CD4-positive, alpha-beta T cell (primary cell): ENCODE measurements at regions of chr5 and their contacts with region 1.

Region 1: DNA sequence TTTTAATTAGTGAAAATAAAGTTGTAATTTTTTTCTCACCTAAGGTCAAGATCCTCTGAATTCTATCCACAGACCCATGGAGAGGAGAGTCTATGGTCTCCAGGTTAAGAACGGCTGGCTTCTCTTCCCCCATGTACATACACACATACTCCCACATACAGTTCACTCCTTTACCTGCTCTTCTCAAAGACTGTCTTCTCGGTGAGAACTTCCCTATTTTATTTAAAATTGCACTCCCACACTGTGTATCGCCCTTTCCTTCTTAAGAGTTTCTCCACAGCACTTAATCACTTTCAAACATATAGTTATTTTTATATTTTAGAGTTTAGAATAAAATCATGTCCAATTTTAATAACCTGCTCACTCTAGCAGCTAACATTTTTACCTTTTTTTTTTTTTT is 3.6 kb upstream of the JADE2 start:
- DNase-seq: no peak
- ATAC-seq: no peak
- H3K4me3 ChIP-seq: no peak overlapping the region
- H3K4me3 Mint-ChIP-seq: no peak overlapping the region
- H3K27ac ChIP-seq: no peak overlapping the region
- H3K27ac Mint-ChIP-seq: peak overlapping the region; percentile 100
- H3K4me1 ChIP-seq: peaks cover 11% of the 10 kb centered on the region
- H3K4me1 Mint-ChIP-seq: peaks cover 15% of the 10 kb centered on the region
- H3K27me3 ChIP-seq: no peaks in the 10 kb centered on the region
- H3K27me3 Mint-ChIP-seq: no peaks in the 10 kb centered on the region
- CTCF ChIP-seq: no peak

Region 2: GRCh38 chr5:134493461-134494055 is 28.3 kb before region 1 on chr5:
- CTCF ChIA-PET with region 1: no interaction called
- POLR2A ChIA-PET with region 1: interaction called, 3 read pairs
- intact Hi-C with region 1: loop called in 1 of 2 experiments (anchors 2 kb)
- DNase-seq: no peak
- ATAC-seq: no peak
- H3K4me3 ChIP-seq: no peak overlapping the region
- H3K4me3 Mint-ChIP-seq: no peak overlapping the region
- H3K27ac ChIP-seq: no peak overlapping the region
- H3K27ac Mint-ChIP-seq: no peak overlapping the region
- H3K4me1 ChIP-seq: no peaks in the 10 kb centered on the region
- H3K4me1 Mint-ChIP-seq: no peaks in the 10 kb centered on the region
- H3K27me3 ChIP-seq: no peaks in the 10 kb centered on the region
- H3K27me3 Mint-ChIP-seq: no peaks in the 10 kb centered on the region
- CTCF ChIP-seq: no peak

Region 3: GRCh38 chr5:134561871-134562296 is 40.0 kb after region 1 on chr5:
- CTCF ChIA-PET with region 1: no interaction called
- POLR2A ChIA-PET with region 1: no interaction called
- intact Hi-C with region 1: no loop called
- DNase-seq: no peak
- ATAC-seq: no peak
- H3K4me3 ChIP-seq: no peak overlapping the region
- H3K4me3 Mint-ChIP-seq: no peak overlapping the region
- H3K27ac ChIP-seq: no peak overlapping the region
- H3K27ac Mint-ChIP-seq: peak overlapping the region; percentile 56
- H3K4me1 ChIP-seq: peaks cover 21% of the 10 kb centered on the region
- H3K4me1 Mint-ChIP-seq: peaks cover 7% of the 10 kb centered on the region
- H3K27me3 ChIP-seq: no peaks in the 10 kb centered on the region
- H3K27me3 Mint-ChIP-seq: no peaks in the 10 kb centered on the region
- CTCF ChIP-seq: no peak

Region 4: DNA sequence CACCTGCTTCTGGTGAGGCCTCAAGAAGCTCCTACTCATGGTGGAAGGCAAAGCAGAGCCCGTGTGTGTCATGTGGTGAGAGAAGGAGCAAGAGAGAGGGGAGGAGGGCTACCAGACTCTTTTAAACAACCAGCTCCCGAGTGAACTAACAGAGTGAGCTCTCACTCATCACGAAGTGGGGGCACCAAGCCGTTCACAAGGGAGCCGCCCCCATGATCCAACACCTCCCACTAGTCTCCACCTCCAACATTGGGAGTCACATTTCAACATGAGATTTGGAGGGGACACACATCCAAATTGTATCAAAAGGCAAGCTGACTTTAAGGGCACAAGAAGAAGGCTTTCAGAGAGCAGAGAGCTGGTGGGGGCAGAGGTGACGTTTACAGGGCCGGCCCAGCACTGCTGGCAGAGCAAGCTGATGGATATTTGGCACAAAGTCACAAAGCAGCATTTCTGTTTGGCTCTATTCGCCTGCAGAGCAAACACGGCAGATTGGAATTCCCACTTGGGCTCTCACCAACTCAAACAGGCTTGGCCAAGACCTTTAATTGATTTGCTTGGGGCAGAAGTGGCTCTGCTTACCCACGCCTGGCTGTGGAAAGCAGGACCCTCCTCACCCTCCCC is 492.2 kb after region 1 on chr5:
- CTCF ChIA-PET with region 1: no interaction called
- POLR2A ChIA-PET with region 1: no interaction called
- intact Hi-C with region 1: no loop called
- DNase-seq: no peak
- ATAC-seq: no peak
- H3K4me3 ChIP-seq: no peak overlapping the region
- H3K4me3 Mint-ChIP-seq: no peak overlapping the region
- H3K27ac ChIP-seq: no peak overlapping the region
- H3K27ac Mint-ChIP-seq: no peak overlapping the region
- H3K4me1 ChIP-seq: no peaks in the 10 kb centered on the region
- H3K4me1 Mint-ChIP-seq: no peaks in the 10 kb centered on the region
- H3K27me3 ChIP-seq: no peaks in the 10 kb centered on the region
- H3K27me3 Mint-ChIP-seq: no peaks in the 10 kb centered on the region
- CTCF ChIP-seq: no peak